CD14-positive monocyte (primary cell): ENCODE measurements at regions of chr19 and their contacts with region 1.

Region 1: GRCh38 chr19:4457654-4458395 is at the start of gene UBXN6:
- DNase-seq: peak; percentile 97 to 98 (median 98)
- H3K4me3 ChIP-seq: peak within 1 kb of the TSS; percentile 65 to 87 (median 76)
- H3K4me3 Mint-ChIP-seq: peak within 1 kb of the TSS; percentile 94 to 97
- H3K27ac ChIP-seq: peak within 1 kb of the TSS; percentile 66 to 78
- H3K27ac Mint-ChIP-seq: peak within 1 kb of the TSS; percentile 91 to 96 (median 92)
- H3K4me1 ChIP-seq: peaks cover 20 to 22% of the 10 kb centered on the region in 2 donors
- H3K4me1 Mint-ChIP-seq: peaks cover 19% of the 10 kb centered on the region
- H3K27me3 ChIP-seq: no peaks in the 10 kb centered on the region
- H3K27me3 Mint-ChIP-seq: peaks cover 0 to 4% (median 3%) of the 10 kb centered on the region in 3 donors
- CTCF ChIP-seq: no peak
- polyA plus RNA-seq, gene UBXN6: 3.8 to 64.5 (median 5.4) TPM

Region 2: GRCh38 chr19:4246767-4247593 is 210.8 kb before region 1 on chr19 and contains the start of gene YJU2:
- intact Hi-C with region 1: loop called in 1 of 2 experiments (anchors 5 kb)
- DNase-seq: peak; percentile 99 to 100 (median 100)
- H3K4me3 ChIP-seq: peak within 1 kb of the TSS; percentile 59 to 98 (median 84)
- H3K4me3 Mint-ChIP-seq: peak within 1 kb of the TSS; percentile 83 to 98
- H3K27ac ChIP-seq: peak within 1 kb of the TSS; percentile 90 to 100
- H3K27ac Mint-ChIP-seq: peak within 1 kb of the TSS; percentile 99 to 100 (median 100)
- H3K4me1 ChIP-seq: peaks cover 13 to 14% of the 10 kb centered on the region in 2 donors
- H3K4me1 Mint-ChIP-seq: peaks cover 12% of the 10 kb centered on the region
- H3K27me3 ChIP-seq: no peaks in the 10 kb centered on the region
- H3K27me3 Mint-ChIP-seq: peaks cover 0 to 3% (median 0%) of the 10 kb centered on the region in 3 donors
- CTCF ChIP-seq: peak; percentile 58
- polyA plus RNA-seq, gene YJU2: 8.6 to 19.3 (median 13.4) TPM

Region 3: GRCh38 chr19:4284176-4284958 is 173.5 kb before region 1 on chr19:
- intact Hi-C with region 1: no loop called
- DNase-seq: no peak
- H3K4me3 ChIP-seq: no peak overlapping the region
- H3K4me3 Mint-ChIP-seq: no peak overlapping the region
- H3K27ac ChIP-seq: no peak overlapping the region
- H3K27ac Mint-ChIP-seq: no peak overlapping the region
- H3K4me1 ChIP-seq: no peaks in the 10 kb centered on the region
- H3K4me1 Mint-ChIP-seq: peaks cover 5% of the 10 kb centered on the region
- H3K27me3 ChIP-seq: peaks cover 11 to 14% of the 10 kb centered on the region in 2 donors
- H3K27me3 Mint-ChIP-seq: peaks cover 24 to 39% (median 30%) of the 10 kb centered on the region in 3 donors
- CTCF ChIP-seq: no peak

Region 4: GRCh38 chr19:4342615-4343369 is 115.0 kb before region 1 on chr19:
- intact Hi-C with region 1: loop called in 1 of 2 experiments (anchors 5 kb)
- DNase-seq: peak; percentile 99 to 100 (median 100)
- H3K4me3 ChIP-seq: peak overlapping the region; percentile 52 to 84 (median 70)
- H3K4me3 Mint-ChIP-seq: peak overlapping the region; percentile 91 to 93
- H3K27ac ChIP-seq: peak overlapping the region; percentile 78 to 85
- H3K27ac Mint-ChIP-seq: peak overlapping the region; percentile 91 to 98 (median 95)
- H3K4me1 ChIP-seq: peaks cover 27 to 37% of the 10 kb centered on the region in 2 donors
- H3K4me1 Mint-ChIP-seq: peaks cover 35% of the 10 kb centered on the region
- H3K27me3 ChIP-seq: no peaks in the 10 kb centered on the region
- H3K27me3 Mint-ChIP-seq: peaks cover 0 to 13% (median 11%) of the 10 kb centered on the region in 3 donors
- CTCF ChIP-seq: peak; percentile 17

Region 5: DNA sequence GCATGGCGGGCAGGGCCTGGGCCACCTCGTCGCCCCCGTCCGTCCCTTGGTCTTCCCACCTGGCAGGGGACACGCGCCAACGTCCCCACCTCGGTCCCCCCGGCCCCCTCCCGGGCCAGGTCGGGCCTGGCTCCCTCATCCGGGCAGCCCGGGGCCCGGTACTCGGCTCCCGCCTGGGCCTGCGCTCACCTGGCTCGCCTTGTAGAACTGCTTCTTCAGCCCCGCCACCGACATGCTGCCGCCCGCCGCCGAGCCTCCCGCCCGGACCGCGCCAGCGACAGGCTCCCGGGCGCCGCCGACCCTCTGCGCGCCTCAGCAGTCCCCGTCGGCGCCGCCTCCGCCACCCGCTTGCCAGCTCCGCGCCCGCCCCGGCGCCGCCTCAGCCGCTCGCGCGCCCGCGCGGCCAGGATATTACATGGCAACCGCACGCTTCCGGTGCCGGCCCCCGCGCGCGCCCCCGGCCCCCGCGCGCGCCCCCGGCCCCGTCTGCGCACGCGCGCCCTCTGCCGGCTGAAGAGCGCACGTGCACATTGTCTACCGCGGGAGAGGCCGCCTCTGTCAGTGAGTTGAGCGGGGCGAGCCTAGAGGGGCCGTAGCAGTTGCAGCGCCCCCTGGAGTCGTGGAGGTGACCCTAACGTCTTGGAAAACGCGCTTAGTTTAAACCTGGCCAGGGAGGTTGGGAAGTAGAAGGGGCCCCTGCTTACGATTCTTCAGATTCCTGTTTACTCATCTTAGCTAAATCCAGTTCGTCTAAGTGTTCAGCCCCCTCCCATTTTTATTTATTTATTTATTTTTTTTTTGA is 57.5 kb before region 1 on chr19 and contains the start of gene SH3GL1:
- intact Hi-C with region 1: loop called (anchors 2 to 5 kb)
- DNase-seq: peak; percentile 94 to 97 (median 94)
- H3K4me3 ChIP-seq: peak within 1 kb of the TSS; percentile 85 to 98 (median 87)
- H3K4me3 Mint-ChIP-seq: peak within 1 kb of the TSS; percentile 87 to 93
- H3K27ac ChIP-seq: peak within 1 kb of the TSS; percentile 92 to 96
- H3K27ac Mint-ChIP-seq: peak within 1 kb of the TSS; percentile 95 to 98 (median 96)
- H3K4me1 ChIP-seq: peaks cover 37 to 50% of the 10 kb centered on the region in 2 donors
- H3K4me1 Mint-ChIP-seq: peaks cover 45% of the 10 kb centered on the region
- H3K27me3 ChIP-seq: no peaks in the 10 kb centered on the region
- H3K27me3 Mint-ChIP-seq: peaks cover 0 to 3% (median 0%) of the 10 kb centered on the region in 3 donors
- CTCF ChIP-seq: peak; percentile 96
- polyA plus RNA-seq, gene SH3GL1: 14.0 to 33.9 (median 15.0) TPM

Region 6: GRCh38 chr19:4431808-4432674 is 25.8 kb before region 1 on chr19:
- intact Hi-C with region 1: loop called in 1 of 2 experiments (anchors 2 kb)
- DNase-seq: peak; percentile 87 to 94 (median 91)
- H3K4me3 ChIP-seq: peak overlapping the region; percentile 13 to 70 (median 38)
- H3K4me3 Mint-ChIP-seq: peak overlapping the region; percentile 82 to 96
- H3K27ac ChIP-seq: peak overlapping the region; percentile 96 to 99
- H3K27ac Mint-ChIP-seq: peak overlapping the region; percentile 94 to 99 (median 98)
- H3K4me1 ChIP-seq: peaks cover 37 to 44% of the 10 kb centered on the region in 2 donors
- H3K4me1 Mint-ChIP-seq: peaks cover 38% of the 10 kb centered on the region
- H3K27me3 ChIP-seq: no peaks in the 10 kb centered on the region
- H3K27me3 Mint-ChIP-seq: peaks cover 0 to 6% (median 5%) of the 10 kb centered on the region in 3 donors
- CTCF ChIP-seq: no peak

Region 7: DNA sequence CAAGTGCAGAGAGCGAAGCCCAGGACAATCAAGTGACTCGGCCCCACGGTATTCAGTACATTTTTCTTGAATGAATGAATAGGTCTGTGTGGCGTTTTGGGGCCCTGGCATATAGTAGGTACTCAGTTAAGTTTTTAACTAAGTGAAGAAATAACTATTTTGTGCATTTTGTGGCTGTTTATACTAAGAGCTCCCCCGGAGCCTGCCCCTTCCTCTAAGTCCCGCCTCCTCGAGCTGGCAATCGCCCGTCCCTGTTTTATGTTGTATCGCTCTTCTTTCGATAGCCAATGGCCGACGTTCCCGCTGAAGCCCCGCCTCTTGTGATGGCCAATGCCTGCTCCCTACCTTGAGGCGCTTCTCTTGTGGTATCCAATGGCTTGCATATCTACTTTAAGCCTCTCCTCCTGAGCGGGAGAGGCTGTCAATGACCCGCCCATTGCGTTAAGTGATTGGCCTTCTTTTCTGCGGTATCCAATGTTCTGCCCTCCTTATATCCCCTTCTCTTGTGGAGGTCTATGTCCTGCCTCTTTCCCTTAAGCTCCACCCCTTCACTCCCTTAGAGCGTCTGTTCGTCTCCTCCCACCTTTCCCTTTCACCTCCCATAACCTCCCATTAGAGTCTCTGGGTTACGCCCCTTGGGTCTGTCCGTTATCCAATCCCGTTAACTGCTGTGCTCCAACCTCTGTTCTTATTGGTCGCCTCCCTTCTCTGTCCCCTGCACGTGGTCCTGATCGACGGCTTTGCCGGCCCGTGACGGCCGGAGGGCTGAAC is 13.8 kb after region 1 on chr19:
- intact Hi-C with region 1: loop called in 1 of 2 experiments (anchors 1 kb)
- DNase-seq: peak; percentile 99 to 100 (median 100)
- H3K4me3 ChIP-seq: peak overlapping the region; percentile 74 to 94 (median 83)
- H3K4me3 Mint-ChIP-seq: no peak overlapping the region
- H3K27ac ChIP-seq: peak overlapping the region; percentile 74 to 87
- H3K27ac Mint-ChIP-seq: no peak overlapping the region
- H3K4me1 ChIP-seq: peaks cover 30 to 35% of the 10 kb centered on the region in 2 donors
- H3K4me1 Mint-ChIP-seq: peaks cover 24% of the 10 kb centered on the region
- H3K27me3 ChIP-seq: no peaks in the 10 kb centered on the region
- H3K27me3 Mint-ChIP-seq: peaks cover 0 to 1% (median 0%) of the 10 kb centered on the region in 3 donors
- CTCF ChIP-seq: no peak

Region 8: DNA sequence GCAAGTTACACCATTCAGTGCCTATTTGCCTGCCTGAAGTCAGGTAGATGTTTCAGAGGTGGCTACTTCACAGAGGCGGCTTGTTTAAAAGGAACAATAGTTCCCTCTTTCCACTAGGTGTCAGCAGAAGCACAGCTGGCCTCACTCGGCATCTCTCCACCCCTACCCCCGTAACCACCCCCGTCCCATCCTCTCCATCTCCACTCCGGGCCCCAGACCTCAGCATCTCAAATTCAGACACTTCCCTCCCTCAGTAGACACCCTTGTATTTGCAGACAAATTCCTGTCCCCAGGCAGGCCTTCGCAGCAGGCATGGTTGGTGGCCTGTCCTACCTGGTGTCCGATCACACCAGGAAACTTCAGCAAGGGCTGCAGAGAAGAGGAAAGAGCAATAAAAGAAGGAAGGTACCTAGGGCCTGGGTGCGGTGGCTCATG is 274.9 kb after region 1 on chr19:
- intact Hi-C with region 1: no loop called
- DNase-seq: peak; percentile 43 to 65 (median 53)
- H3K4me3 ChIP-seq: peak overlapping the region in 1 of 3 experiments; percentile 28
- H3K4me3 Mint-ChIP-seq: peak overlapping the region in 1 of 2 donors; percentile 15
- H3K27ac ChIP-seq: no peak overlapping the region
- H3K27ac Mint-ChIP-seq: no peak overlapping the region
- H3K4me1 ChIP-seq: peaks cover 0 to 3% of the 10 kb centered on the region in 2 donors
- H3K4me1 Mint-ChIP-seq: peaks cover 12% of the 10 kb centered on the region
- H3K27me3 ChIP-seq: peaks cover 0 to 6% of the 10 kb centered on the region in 2 donors
- H3K27me3 Mint-ChIP-seq: peaks cover 7 to 18% (median 14%) of the 10 kb centered on the region in 3 donors
- CTCF ChIP-seq: peak; percentile 75